Prostate gland (tissue), 2 donors: ENCODE measurements at regions of chr12 and their contacts with region 1.

Region 1: GRCh38 chr12:9079883-9080675 is 35.6 kb downstream of the A2M start:
- DNase-seq: no peak
- H3K4me3 ChIP-seq: no peak overlapping the region
- H3K27ac ChIP-seq: no peak overlapping the region
- H3K4me1 ChIP-seq: no peaks in the 10 kb centered on the region
- H3K27me3 ChIP-seq: no peaks in the 10 kb centered on the region
- CTCF ChIP-seq: no peak
- POLR2A ChIP-seq: no peak

Region 2: GRCh38 chr12:9098463-9099026 is 18.5 kb after region 1 on chr12:
- intact Hi-C with region 1: loop called (anchors 2 kb)
- DNase-seq: no peak
- H3K4me3 ChIP-seq: no peak overlapping the region
- H3K27ac ChIP-seq: no peak overlapping the region
- H3K4me1 ChIP-seq: no peaks in the 10 kb centered on the region
- H3K27me3 ChIP-seq: no peaks in the 10 kb centered on the region
- CTCF ChIP-seq: no peak
- POLR2A ChIP-seq: no peak